Activated CD4-positive, alpha-beta T cell treated with anti-CD3 and anti-CD28 coated beads, Interleukin-2, amount 10 ng/mL, durations not matched to agents 24 days and 14 days (primary cell): ENCODE measurements at regions of chr2 and their contacts with region 1.

Region 1: GRCh38 chr2:119366649-119367471 is at the starts of genes C2orf76 and DBI:
- DNase-seq: peak; percentile 98
- H3K4me3 Mint-ChIP-seq: peak within 1 kb of the TSS; percentile 98
- H3K27ac Mint-ChIP-seq: peak within 1 kb of the TSS; percentile 97
- H3K4me1 Mint-ChIP-seq: peaks cover 35% of the 10 kb centered on the region
- H3K27me3 Mint-ChIP-seq: no peaks in the 10 kb centered on the region
- total RNA-seq, gene C2orf76: 10.2 and 11.5 TPM in 2 replicates
- total RNA-seq, gene DBI: 139 and 145 TPM in 2 replicates

Region 2: GRCh38 chr2:118088051-118089024 is 1278.5 kb before region 1 on chr2 and contains the start of gene INSIG2:
- intact Hi-C with region 1: loop called (anchors 2 kb)
- DNase-seq: peak; percentile 98
- H3K4me3 Mint-ChIP-seq: peak within 1 kb of the TSS; percentile 93
- H3K27ac Mint-ChIP-seq: peak within 1 kb of the TSS; percentile 92
- H3K4me1 Mint-ChIP-seq: peaks cover 16% of the 10 kb centered on the region
- H3K27me3 Mint-ChIP-seq: peaks cover 9% of the 10 kb centered on the region
- total RNA-seq, gene INSIG2: 35.2 and 35.6 TPM in 2 replicates

Region 3: GRCh38 chr2:119338826-119339561 is 27.9 kb before region 1 on chr2:
- intact Hi-C with region 1: no loop called
- DNase-seq: peak; percentile 72
- H3K4me3 Mint-ChIP-seq: peak overlapping the region; percentile 39
- H3K27ac Mint-ChIP-seq: no peak overlapping the region
- H3K4me1 Mint-ChIP-seq: peaks cover 3% of the 10 kb centered on the region
- H3K27me3 Mint-ChIP-seq: no peaks in the 10 kb centered on the region

Region 4: DNA sequence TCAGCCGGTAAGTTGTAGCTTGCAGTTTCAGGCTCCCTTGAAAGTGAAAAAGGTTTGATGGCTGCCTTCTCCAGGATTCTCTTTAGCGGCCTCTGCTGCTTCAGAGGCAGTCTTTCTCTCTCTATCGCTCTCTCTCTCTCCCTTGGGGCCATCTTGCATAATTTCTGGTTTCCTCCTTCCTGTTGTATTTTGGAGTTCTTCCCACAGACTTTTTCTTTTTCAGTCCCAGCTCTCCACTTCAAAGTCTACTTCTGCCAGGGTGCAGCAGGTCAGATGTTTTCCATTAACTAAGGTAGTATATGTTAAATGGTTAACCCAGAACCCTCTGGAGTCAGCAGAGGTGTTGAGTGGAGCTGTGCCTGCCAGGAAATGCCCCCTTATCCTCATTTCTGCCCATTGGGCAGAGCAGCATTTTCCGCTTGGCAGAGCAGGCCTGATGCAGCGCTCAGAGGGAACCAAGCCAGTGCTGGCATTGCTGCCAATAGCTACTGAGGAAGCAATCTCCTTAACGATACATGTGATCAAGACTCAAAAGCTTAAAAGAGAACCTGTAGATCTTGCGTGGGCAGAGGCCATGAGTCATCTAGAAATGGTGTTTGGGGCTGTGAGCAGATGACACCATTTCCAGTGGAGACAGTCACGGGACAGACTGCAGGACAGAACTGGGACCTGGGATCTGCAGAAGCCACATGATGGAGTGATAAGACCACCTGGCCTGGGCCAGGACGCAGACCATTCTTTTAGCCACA is 20.7 kb after region 1 on chr2:
- intact Hi-C with region 1: loop called (anchors 1 kb)
- DNase-seq: no peak
- H3K4me3 Mint-ChIP-seq: peak overlapping the region; percentile 14
- H3K27ac Mint-ChIP-seq: peak overlapping the region; percentile 57
- H3K4me1 Mint-ChIP-seq: peaks cover 7% of the 10 kb centered on the region
- H3K27me3 Mint-ChIP-seq: peaks cover 4% of the 10 kb centered on the region

Region 5: GRCh38 chr2:119431155-119431975 is 64.5 kb after region 1 on chr2 and contains the start of gene TMEM37:
- intact Hi-C with region 1: no loop called
- DNase-seq: no peak
- H3K4me3 Mint-ChIP-seq: peak within 1 kb of the TSS; percentile 36
- H3K27ac Mint-ChIP-seq: no peak within 1 kb of the TSS
- H3K4me1 Mint-ChIP-seq: peaks cover 3% of the 10 kb centered on the region
- H3K27me3 Mint-ChIP-seq: peaks cover 58% of the 10 kb centered on the region
- total RNA-seq, gene TMEM37: not detected in 2 replicates

Region 6: DNA sequence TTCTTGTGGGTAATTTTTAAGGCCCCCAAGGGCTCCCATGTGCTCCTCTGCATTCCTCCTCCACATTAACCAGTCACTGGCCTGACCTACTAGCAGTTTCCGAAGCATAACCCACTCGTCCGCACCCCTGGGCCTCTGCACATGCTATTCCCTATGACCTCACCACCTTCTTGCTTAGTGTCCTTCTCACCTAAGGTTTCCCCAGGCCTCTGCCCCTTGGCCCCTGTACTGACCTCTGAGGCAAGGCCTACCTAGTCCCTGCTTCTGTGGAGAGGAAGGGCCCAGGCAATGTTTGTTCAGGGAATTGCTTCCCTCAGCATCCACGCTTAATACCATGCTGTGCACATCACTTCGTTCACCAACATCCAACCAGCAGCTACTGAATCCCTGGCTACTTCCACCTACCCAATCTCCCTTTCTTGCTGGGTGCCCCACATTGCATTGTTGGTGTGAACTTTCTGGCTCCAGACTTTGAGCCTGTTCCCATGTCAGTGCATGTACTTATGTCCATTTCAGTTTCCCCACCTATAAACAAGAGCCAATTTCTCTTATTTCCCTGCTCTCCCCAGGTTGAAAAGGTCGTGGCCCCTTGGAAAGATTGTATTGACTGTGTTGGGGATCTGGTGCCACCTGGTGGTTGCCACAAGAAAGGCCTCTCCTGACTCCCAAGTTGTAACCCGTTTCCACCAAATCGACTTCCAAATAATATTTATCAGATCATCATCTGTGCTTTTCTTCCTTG is 292.9 kb after region 1 on chr2:
- intact Hi-C with region 1: no loop called
- DNase-seq: peak; percentile 78
- H3K4me3 Mint-ChIP-seq: no peak overlapping the region
- H3K27ac Mint-ChIP-seq: no peak overlapping the region
- H3K4me1 Mint-ChIP-seq: peaks cover 14% of the 10 kb centered on the region
- H3K27me3 Mint-ChIP-seq: peaks cover 8% of the 10 kb centered on the region

Region 7: GRCh38 chr2:119759451-119760236 is 392.8 kb after region 1 on chr2 and contains the start of gene PTPN4:
- intact Hi-C with region 1: loop called (anchors 1 kb)
- DNase-seq: peak; percentile 98
- H3K4me3 Mint-ChIP-seq: peak within 1 kb of the TSS; percentile 92
- H3K27ac Mint-ChIP-seq: peak within 1 kb of the TSS; percentile 93
- H3K4me1 Mint-ChIP-seq: peaks cover 36% of the 10 kb centered on the region
- H3K27me3 Mint-ChIP-seq: no peaks in the 10 kb centered on the region
- total RNA-seq, gene PTPN4: 21.9 and 22.0 TPM in 2 replicates

Region 8: DNA sequence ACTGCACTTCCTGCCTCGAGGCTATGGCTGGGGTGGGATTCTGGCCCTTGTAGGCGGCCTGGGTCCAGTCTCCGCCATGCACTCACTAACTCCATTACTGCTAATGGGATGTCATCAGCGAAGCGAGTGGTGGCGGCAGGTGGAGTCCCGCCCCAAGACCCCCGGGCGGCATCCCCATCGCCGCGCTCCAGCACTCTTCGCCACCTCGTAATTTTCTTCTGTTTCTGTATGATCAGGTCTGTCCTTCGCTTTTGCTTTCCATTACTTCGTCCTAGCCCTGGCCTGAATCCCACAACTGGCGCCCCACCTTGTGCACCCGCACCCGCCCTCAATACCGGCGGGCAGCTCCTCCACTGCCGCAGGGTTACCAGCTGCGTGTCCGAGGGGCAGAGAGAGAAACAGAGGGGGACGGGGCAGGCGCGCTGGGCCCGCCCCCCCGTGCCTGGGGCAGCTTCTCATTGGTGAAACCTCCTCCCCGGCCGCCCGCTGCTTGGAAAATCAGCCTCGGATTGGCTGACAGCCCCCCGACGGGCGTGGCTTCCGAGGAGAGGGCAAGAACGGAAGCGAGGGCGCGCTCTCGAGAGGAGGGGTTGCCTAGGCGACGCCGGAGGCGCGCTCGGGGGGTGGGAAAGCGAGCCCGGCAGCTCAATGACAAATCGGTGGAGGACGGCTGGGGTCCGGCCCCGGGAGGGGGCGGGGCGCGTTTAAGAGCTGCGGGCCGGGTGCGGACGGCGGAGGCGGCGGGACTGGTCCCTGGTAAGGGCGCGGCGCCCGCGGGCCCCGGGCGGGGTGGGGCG is 885.6 kb after region 1 on chr2 and contains the start of gene RALB:
- intact Hi-C with region 1: loop called (anchors 10 kb)
- DNase-seq: peak; percentile 100
- H3K4me3 Mint-ChIP-seq: peak within 1 kb of the TSS; percentile 99
- H3K27ac Mint-ChIP-seq: peak within 1 kb of the TSS; percentile 96
- H3K4me1 Mint-ChIP-seq: peaks cover 70% of the 10 kb centered on the region
- H3K27me3 Mint-ChIP-seq: peaks cover 4% of the 10 kb centered on the region
- total RNA-seq, gene RALB: 72.1 and 80.0 TPM in 2 replicates